ENCODE measurements at regions of chr5 and their contacts with region 1.

Region 1: GRCh38 chr5:38809388-38810359 is 36.1 kb upstream of the OSMR start:
- DNase-seq: peak; percentile 77 to 88 (median 85)
- H3K4me3 ChIP-seq: no peak overlapping the region
- H3K27ac ChIP-seq: peak overlapping the region in 1 of 2 donors; percentile 33
- H3K4me1 ChIP-seq: peaks cover 1% of the 10 kb centered on the region
- H3K27me3 ChIP-seq: no peaks in the 10 kb centered on the region
- CTCF ChIP-seq: peak; percentile 43 to 88 (median 85)
- EP300 ChIP-seq: no peak
- POLR2A ChIP-seq: no peak

Region 2: DNA sequence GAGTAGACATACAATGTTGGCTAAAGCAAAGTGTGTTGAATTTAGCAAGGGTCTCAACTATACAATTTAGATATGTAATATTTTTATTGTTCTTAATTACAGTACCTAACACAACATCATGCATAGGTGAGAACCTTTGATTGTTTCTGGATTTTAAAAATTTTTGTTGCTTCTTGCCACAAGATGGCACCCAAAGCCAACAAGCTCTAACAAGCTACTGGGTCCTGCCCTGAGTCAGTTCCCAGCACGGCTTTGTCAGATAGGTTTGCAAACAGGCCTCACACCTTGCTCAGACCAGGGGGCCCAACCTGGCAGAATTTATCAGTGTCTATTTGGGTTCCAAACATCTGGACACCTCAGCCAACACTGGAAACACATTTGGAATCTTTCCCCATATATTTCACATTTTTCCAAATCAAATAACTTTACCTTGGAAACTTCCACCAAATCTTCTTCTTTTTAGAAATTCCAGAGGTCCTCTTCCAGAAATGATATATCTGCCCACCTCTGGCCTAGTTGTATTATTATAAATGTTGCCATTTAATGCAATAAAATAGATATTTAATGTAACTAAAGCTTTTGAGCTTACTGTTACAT is 600.8 kb before region 1 on chr5:
- intact Hi-C with region 1: loop called in 1 of 4 experiments (anchors 10 kb)
- DNase-seq: peak; percentile 27 to 54 (median 41)
- H3K4me3 ChIP-seq: no peak overlapping the region
- H3K27ac ChIP-seq: no peak overlapping the region
- H3K4me1 ChIP-seq: no peaks in the 10 kb centered on the region
- H3K27me3 ChIP-seq: no peaks in the 10 kb centered on the region
- CTCF ChIP-seq: peak in 2 of 3 donors; percentile 34 to 49
- EP300 ChIP-seq: no peak
- POLR2A ChIP-seq: no peak

Region 3: DNA sequence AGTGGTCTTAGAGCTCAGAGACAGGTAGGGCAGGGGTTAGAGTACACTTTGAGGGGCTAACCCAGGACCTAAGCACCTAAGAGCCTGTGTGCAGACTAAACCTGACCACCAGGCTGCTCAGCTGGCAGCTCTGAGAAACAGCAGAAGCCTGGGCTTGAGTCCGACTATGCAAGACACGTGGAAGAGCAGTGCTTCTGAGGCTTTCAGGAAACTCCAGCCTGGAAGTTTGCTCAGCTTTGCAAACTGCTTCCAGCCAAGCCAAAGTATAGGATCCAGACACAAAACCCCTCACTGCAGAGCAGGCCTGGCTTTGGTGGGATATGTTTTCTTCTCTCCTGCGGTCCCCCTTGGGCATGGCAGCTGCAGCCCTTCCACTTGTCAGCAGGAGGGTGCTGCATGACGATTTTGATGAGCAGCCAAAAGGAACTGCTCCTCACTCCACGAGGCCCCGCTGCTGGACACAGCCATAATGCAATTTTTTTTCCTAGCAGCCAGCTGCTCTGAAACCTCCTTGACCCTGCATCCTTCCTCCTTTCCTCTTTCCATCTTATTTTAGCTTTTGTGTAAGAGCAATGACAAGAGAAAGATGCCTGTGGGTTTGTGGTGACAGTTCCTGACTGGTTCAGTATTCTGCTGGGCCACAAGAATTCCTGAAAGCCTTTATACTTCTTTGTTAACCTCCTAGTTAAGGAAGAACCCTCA is 376.4 kb before region 1 on chr5:
- intact Hi-C with region 1: loop called in 2 of 4 experiments (anchors 5 kb)
- DNase-seq: peak; percentile 51 to 57 (median 55)
- H3K4me3 ChIP-seq: no peak overlapping the region
- H3K27ac ChIP-seq: peak overlapping the region in 1 of 2 donors; percentile 26
- H3K4me1 ChIP-seq: peaks cover 4% of the 10 kb centered on the region
- H3K27me3 ChIP-seq: no peaks in the 10 kb centered on the region
- CTCF ChIP-seq: no peak
- EP300 ChIP-seq: no peak
- POLR2A ChIP-seq: no peak

Region 4: GRCh38 chr5:38441453-38442246 is 368.0 kb before region 1 on chr5:
- intact Hi-C with region 1: loop called in 3 of 4 experiments (anchors 5 kb)
- DNase-seq: peak; percentile 87 to 94 (median 90)
- H3K4me3 ChIP-seq: no peak overlapping the region
- H3K27ac ChIP-seq: no peak overlapping the region
- H3K4me1 ChIP-seq: no peaks in the 10 kb centered on the region
- H3K27me3 ChIP-seq: no peaks in the 10 kb centered on the region
- CTCF ChIP-seq: peak; percentile 86 to 97 (median 95)
- EP300 ChIP-seq: no peak
- POLR2A ChIP-seq: no peak

Region 5: GRCh38 chr5:38556599-38557305 is 252.9 kb before region 1 on chr5 and contains the start of gene LIFR:
- intact Hi-C with region 1: loop called in 1 of 4 experiments (anchors 10 kb)
- DNase-seq: peak; percentile 84 to 92 (median 88)
- H3K4me3 ChIP-seq: peak within 1 kb of the TSS; percentile 93
- H3K27ac ChIP-seq: peak within 1 kb of the TSS; percentile 92 to 96
- H3K4me1 ChIP-seq: no peaks in the 10 kb centered on the region
- H3K27me3 ChIP-seq: no peaks in the 10 kb centered on the region
- CTCF ChIP-seq: no peak
- EP300 ChIP-seq: no peak
- POLR2A ChIP-seq: peak; percentile 77
- total RNA-seq, gene LIFR: 67.1 to 143 (median 89.8) TPM